HepG2 (cell line): ENCODE measurements at regions of chr16 and their contacts with region 1.

Region 1: GRCh38 chr16:84976644-84977400 is 34.5 kb downstream of the ZDHHC7 start:
- DNase-seq: peak; percentile 97
- ATAC-seq: peak; percentile 95
- H3K4me3 ChIP-seq: peak overlapping the region in 1 of 3 experiments; percentile 20; a peak in 2 of 6 replicates
- H3K27ac ChIP-seq: peak overlapping the region; percentile 80
- H3K4me1 ChIP-seq: peaks cover 34% of the 10 kb centered on the region
- H3K27me3 ChIP-seq: no peaks in the 10 kb centered on the region
- CTCF ChIP-seq: no peak; the same call in 1 of the 2 replicates
- EP300 ChIP-seq: peak in 1 of 2 experiments; percentile 49; a peak in 2 of 4 replicates
- POLR2A ChIP-seq: no peak
- RAD21 ChIP-seq: peak; percentile 18; the same call in 1 of the 2 replicates

Region 2: DNA sequence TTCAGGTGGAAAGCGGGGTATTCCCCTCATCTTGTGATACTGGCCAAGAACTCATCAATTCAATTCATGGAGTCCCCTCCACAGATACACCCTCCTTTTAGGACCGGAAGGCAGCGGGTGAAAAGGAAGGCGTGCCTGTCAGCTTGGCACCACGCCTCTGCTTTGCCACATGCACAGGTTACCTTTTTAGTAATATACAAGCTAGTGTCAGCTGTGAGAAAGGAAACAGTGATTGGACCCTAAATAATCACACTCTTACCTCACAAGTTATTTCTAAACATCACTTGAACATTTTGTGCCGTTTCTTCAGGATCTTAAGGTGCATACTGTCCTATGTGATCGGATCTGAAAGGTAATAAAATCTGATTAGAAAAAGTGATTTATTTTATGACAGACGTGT is 18.8 kb after region 1 on chr16:
- CTCF ChIA-PET with region 1: no interaction called
- POLR2A ChIA-PET with region 1: interaction called, 29 read pairs
- in situ Hi-C with region 1: no loop called
- intact Hi-C with region 1: loop called (anchors 2 kb)
- DNase-seq: no peak
- ATAC-seq: no peak
- H3K4me3 ChIP-seq: no peak overlapping the region
- H3K27ac ChIP-seq: peak overlapping the region; percentile 77
- H3K4me1 ChIP-seq: peaks cover 75% of the 10 kb centered on the region
- H3K27me3 ChIP-seq: no peaks in the 10 kb centered on the region
- CTCF ChIP-seq: no peak
- EP300 ChIP-seq: no peak
- POLR2A ChIP-seq: no peak
- RAD21 ChIP-seq: no peak

Region 3: DNA sequence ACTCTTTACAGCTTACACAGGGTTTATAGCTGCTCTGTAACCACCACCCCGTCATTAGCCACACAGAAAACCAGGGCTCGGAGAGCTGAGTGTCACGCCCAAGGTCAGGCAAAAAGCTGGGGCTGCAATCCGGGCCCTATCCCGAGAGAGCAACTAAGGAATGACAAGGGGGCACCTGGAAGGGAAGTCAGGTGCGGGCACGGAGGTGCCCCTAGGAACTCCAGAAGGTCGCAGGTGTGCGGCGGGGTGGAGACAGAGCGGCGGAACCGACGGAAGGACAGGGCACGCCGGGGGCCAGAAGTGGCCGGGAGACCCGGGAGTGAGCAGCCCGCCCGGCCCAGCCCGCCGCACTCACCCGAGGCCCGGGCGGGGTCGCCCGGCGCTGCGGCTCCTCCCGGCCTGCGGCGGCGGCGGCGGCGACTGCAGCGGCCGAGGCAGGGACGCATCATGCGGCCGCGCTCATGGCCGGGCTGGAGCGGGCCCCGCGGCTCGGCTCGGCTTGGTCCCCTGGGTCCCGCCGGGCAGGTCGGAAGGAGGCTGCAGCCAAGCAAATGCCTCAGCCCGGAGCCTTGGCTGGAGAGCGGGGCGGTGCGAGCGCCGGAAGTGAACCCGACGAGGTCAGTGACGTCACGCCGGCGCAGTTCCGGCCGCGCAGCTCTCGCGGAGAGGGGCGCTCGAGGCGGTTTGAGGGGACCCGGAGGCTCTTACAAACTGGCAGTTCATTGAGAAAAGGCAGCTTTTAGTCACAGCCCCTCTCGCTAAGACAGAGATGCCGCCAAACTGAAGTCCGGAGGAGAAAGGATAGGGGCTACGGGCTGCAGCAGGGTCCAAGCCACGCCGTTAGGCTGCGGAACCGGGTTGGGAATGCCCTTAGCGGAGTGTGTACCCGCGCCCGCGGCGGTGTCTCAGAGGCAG is 34.4 kb after region 1 on chr16 and contains the start of gene ZDHHC7:
- CTCF ChIA-PET with region 1: no interaction called
- POLR2A ChIA-PET with region 1: interaction called, 20 read pairs
- in situ Hi-C with region 1: no loop called
- intact Hi-C with region 1: loop called (anchors 1 kb)
- DNase-seq: peak; percentile 76
- ATAC-seq: peak; percentile 89
- H3K4me3 ChIP-seq: peak within 1 kb of the TSS; percentile 79 to 97 (median 92)
- H3K27ac ChIP-seq: peak within 1 kb of the TSS; percentile 93
- H3K4me1 ChIP-seq: peaks cover 73% of the 10 kb centered on the region
- H3K27me3 ChIP-seq: no peaks in the 10 kb centered on the region; a peak in 2 of 5 replicates
- CTCF ChIP-seq: peak; percentile 49
- EP300 ChIP-seq: no peak; a peak in 1 of 4 replicates
- POLR2A ChIP-seq: peak; percentile 91 to 93; a peak in 3 of 4 replicates
- RAD21 ChIP-seq: peak; percentile 66
- total RNA-seq, gene ZDHHC7: 39.6 and 46.8 TPM in 2 replicates

Region 4: GRCh38 chr16:85086347-85087291 is 109.8 kb after region 1 on chr16:
- CTCF ChIA-PET with region 1: no interaction called
- POLR2A ChIA-PET with region 1: interaction called, 4 read pairs
- in situ Hi-C with region 1: no loop called
- intact Hi-C with region 1: loop called (anchors 2 kb)
- DNase-seq: peak; percentile 56
- ATAC-seq: peak; percentile 79
- H3K4me3 ChIP-seq: peak overlapping the region in 1 of 3 experiments; percentile 30; a peak in 1 of 6 replicates
- H3K27ac ChIP-seq: no peak overlapping the region
- H3K4me1 ChIP-seq: peaks cover 7% of the 10 kb centered on the region; the same call in 1 of the 2 replicates
- H3K27me3 ChIP-seq: peaks cover 23 to 84% of the 10 kb centered on the region in 2 experiments
- CTCF ChIP-seq: peak; percentile 92
- EP300 ChIP-seq: no peak
- POLR2A ChIP-seq: no peak
- RAD21 ChIP-seq: peak; percentile 64